Activated CD8-positive, alpha-beta T cell treated with anti-CD3 and anti-CD28 coated beads for 36 hours (primary cell): ENCODE measurements at regions of chr12 and their contacts with region 1.

Region 1: GRCh38 chr12:54207484-54208294 is 18.9 kb upstream of the SMUG1 start:
- DNase-seq: peak; percentile 90
- ATAC-seq: peak; percentile 96
- H3K4me3 Mint-ChIP-seq: no peak overlapping the region
- H3K27ac Mint-ChIP-seq: no peak overlapping the region
- H3K4me1 Mint-ChIP-seq: no peaks in the 10 kb centered on the region
- H3K27me3 Mint-ChIP-seq: peaks cover 15% of the 10 kb centered on the region
- CTCF ChIP-seq: peak; percentile 92

Region 2: DNA sequence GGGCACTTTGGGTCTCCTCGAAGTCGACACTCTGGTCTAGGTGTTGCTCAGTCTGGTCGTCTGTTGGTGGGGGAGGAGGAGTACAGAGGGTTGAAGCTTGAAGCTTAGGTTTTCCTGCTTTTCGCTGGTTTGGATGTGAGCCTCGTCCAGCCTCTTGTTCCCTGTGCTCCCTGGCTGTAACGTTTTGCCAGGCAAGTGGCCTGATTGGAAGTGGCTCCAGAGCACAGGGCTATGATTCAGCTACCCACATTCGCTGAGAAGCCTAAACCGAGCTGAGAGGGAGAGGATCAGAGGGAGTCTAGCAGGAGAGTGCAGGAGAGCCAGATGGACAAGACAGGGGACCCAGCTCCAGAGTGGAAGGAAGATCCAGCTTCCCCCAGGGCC is 216.6 kb before region 1 on chr12:
- CTCF ChIA-PET with region 1: interaction called, 57 read pairs
- POLR2A ChIA-PET with region 1: no interaction called
- intact Hi-C with region 1: no loop called
- DNase-seq: no peak
- ATAC-seq: no peak
- H3K4me3 Mint-ChIP-seq: no peak overlapping the region
- H3K27ac Mint-ChIP-seq: no peak overlapping the region
- H3K4me1 Mint-ChIP-seq: peaks cover 43% of the 10 kb centered on the region
- H3K27me3 Mint-ChIP-seq: peaks cover 92% of the 10 kb centered on the region
- CTCF ChIP-seq: no peak

Region 3: GRCh38 chr12:54017878-54018467 is 189.7 kb before region 1 on chr12:
- CTCF ChIA-PET with region 1: interaction called, 23 read pairs
- POLR2A ChIA-PET with region 1: interaction called, 3 read pairs
- intact Hi-C with region 1: no loop called
- DNase-seq: peak; percentile 84
- ATAC-seq: peak; percentile 92
- H3K4me3 Mint-ChIP-seq: peak overlapping the region; percentile 76
- H3K27ac Mint-ChIP-seq: no peak overlapping the region
- H3K4me1 Mint-ChIP-seq: peaks cover 15% of the 10 kb centered on the region
- H3K27me3 Mint-ChIP-seq: peaks cover 67% of the 10 kb centered on the region
- CTCF ChIP-seq: no peak